Activated CD4-positive, alpha-beta memory T cell treated with anti-CD3 and anti-CD28 coated beads, Interleukin-2, amount 10 ng/mL, durations not matched to agents 7 days and 5 days (primary cell): ENCODE measurements at regions of chr19 and their contacts with region 1.

Region 1: DNA sequence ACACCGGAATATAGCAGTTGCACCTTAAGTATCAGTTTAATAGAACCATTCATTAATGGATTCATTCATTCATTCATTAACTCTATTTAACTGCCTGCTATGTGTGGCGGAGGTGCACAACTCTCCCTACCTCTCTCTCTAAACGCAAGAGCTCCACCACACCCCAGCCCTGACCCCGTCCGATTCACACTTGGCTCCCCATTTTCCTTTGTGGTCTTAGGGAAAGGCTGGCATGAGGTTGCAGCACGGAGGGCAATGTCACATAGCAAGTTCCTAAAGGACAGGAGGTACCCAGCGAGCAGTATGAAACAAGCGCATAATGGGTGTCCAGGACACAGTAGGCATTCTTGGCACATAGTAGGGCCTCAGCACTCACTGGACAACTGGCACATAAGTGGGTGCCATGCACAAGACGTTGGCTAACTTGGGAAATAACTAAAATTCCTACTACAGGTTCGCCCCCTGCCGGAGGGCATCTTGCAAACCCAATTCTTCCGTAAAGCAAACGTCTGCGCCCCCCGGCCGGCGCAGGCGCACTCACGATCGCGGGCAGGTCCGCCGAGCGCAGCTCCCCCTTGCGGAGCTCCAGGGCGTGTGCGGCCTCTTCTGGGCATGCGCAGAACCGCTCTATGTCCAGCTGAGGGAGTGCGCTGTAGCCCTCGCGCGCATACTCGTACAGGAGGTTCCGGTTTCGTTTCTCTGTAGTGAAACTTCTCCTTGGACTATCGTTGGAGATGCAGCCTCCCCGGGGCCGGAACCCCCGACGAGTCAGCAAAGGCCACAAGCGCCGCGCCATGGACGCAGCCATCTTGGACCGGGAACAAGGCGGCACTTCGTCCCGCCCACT is at the start of gene SARS2:
- DNase-seq: peak; percentile 94
- H3K4me3 Mint-ChIP-seq: peak within 1 kb of the TSS; percentile 93
- H3K27ac Mint-ChIP-seq: peak within 1 kb of the TSS; percentile 92
- H3K4me1 Mint-ChIP-seq: peaks cover 55% of the 10 kb centered on the region
- H3K27me3 Mint-ChIP-seq: no peaks in the 10 kb centered on the region
- total RNA-seq, gene SARS2: 28.4 to 32.7 TPM

Region 2: GRCh38 chr19:38425810-38426466 is 504.2 kb before region 1 on chr19 and contains the start of gene RASGRP4:
- CTCF ChIA-PET with region 1: interaction called, 18 read pairs
- POLR2A ChIA-PET with region 1: no interaction called
- DNase-seq: peak; percentile 61
- H3K4me3 Mint-ChIP-seq: peak within 1 kb of the TSS; percentile 78
- H3K27ac Mint-ChIP-seq: peak within 1 kb of the TSS; percentile 88
- H3K4me1 Mint-ChIP-seq: peaks cover 39% of the 10 kb centered on the region
- H3K27me3 Mint-ChIP-seq: no peaks in the 10 kb centered on the region
- total RNA-seq, gene RASGRP4: 19.5 to 20.0 TPM

Region 3: DNA sequence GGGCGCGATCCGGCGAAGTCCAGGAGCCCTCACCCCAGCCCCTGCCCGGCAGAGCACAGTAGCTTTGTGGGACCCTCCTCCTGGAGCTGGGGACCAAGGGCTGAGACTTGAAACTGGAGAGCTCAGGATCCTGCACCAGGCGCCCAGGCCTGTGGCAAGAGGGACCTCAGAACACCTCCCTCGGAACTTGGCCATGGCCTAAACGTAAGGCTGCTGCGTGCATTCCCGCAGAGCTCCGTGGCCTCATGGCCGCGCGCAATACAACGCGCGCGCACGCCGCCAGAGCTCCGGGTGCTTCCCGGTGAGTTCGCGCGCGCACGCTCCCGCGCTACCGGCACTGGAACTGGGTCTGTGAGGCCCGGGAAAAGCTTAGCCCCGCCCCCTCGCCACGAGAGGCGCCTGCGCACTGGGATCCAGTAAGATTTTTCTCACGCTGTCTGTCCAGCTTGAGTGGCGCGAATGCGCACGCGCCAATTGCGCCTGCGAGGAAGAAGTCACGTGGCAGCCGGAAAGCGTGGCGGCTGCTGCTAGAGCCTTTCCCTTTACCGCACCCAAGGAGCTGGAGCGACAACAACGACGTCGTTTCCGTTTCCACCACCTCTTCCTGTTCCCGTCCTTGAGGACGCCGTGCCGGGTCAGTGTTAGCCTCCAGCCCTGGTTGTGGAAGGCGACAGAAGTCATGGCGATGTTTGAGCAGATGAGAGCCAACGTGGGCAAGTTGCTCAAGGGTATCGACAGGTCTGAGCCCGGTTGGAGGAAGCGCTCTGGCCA is 311.4 kb before region 1 on chr19 and contains the start of gene EIF3K:
- CTCF ChIA-PET with region 1: interaction called, 17 read pairs
- POLR2A ChIA-PET with region 1: interaction called, 6 read pairs
- DNase-seq: peak; percentile 98
- H3K4me3 Mint-ChIP-seq: peak within 1 kb of the TSS; percentile 99
- H3K27ac Mint-ChIP-seq: peak within 1 kb of the TSS; percentile 93
- H3K4me1 Mint-ChIP-seq: peaks cover 51% of the 10 kb centered on the region
- H3K27me3 Mint-ChIP-seq: no peaks in the 10 kb centered on the region
- total RNA-seq, gene EIF3K: 297 TPM

Region 4: GRCh38 chr19:38769635-38770211 is 160.4 kb before region 1 on chr19:
- CTCF ChIA-PET with region 1: interaction called, 16 read pairs
- POLR2A ChIA-PET with region 1: interaction called, 6 read pairs
- DNase-seq: peak; percentile 93
- H3K4me3 Mint-ChIP-seq: peak overlapping the region; percentile 52
- H3K27ac Mint-ChIP-seq: peak overlapping the region; percentile 70
- H3K4me1 Mint-ChIP-seq: peaks cover 12% of the 10 kb centered on the region
- H3K27me3 Mint-ChIP-seq: peaks cover 2% of the 10 kb centered on the region

Region 5: DNA sequence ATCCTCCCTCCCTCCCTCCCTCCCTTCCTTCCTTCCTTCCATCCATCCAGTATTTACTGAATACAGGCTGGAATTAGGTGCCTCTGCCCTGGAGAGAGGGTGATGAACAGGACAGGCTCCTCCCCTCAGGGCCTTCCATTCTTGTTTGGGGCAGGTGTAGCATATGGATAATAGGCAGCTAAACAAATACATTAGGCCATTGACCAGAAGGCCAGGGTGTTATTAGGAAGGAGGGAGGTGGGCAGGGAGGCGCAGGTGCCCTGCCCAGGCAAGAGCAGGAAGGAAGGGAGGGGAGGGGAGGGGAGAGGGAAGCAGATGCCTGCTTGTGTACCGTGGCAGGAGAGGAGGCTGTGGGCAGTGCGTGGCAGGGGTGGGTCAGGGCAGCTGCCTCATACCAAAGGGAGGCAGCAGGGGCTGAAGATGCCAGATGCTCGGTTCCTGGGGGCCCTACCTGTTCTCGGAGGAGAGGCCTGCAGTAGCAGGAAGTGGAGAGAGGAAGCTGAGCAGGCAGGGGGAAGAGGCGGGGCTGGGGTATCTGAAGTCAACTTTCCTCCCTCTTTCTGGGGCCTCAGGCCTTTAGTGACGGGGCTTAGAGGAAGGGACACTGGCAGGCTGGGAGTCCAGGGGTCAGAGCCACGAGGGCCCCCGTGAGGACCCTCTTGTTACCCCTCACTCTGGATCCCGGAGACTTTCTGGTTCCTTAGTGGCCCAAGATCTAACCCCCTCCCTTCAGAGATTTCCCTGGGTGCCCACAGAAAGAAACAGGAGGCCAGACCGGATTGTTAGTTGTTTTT is 52.2 kb before region 1 on chr19 and contains the start of gene RINL:
- CTCF ChIA-PET with region 1: interaction called, 21 read pairs
- POLR2A ChIA-PET with region 1: no interaction called
- DNase-seq: peak; percentile 78
- H3K4me3 Mint-ChIP-seq: peak within 1 kb of the TSS; percentile 87
- H3K27ac Mint-ChIP-seq: peak within 1 kb of the TSS; percentile 98
- H3K4me1 Mint-ChIP-seq: peaks cover 43% of the 10 kb centered on the region
- H3K27me3 Mint-ChIP-seq: no peaks in the 10 kb centered on the region
- total RNA-seq, gene RINL: 79.9 to 82.2 TPM

Region 6: DNA sequence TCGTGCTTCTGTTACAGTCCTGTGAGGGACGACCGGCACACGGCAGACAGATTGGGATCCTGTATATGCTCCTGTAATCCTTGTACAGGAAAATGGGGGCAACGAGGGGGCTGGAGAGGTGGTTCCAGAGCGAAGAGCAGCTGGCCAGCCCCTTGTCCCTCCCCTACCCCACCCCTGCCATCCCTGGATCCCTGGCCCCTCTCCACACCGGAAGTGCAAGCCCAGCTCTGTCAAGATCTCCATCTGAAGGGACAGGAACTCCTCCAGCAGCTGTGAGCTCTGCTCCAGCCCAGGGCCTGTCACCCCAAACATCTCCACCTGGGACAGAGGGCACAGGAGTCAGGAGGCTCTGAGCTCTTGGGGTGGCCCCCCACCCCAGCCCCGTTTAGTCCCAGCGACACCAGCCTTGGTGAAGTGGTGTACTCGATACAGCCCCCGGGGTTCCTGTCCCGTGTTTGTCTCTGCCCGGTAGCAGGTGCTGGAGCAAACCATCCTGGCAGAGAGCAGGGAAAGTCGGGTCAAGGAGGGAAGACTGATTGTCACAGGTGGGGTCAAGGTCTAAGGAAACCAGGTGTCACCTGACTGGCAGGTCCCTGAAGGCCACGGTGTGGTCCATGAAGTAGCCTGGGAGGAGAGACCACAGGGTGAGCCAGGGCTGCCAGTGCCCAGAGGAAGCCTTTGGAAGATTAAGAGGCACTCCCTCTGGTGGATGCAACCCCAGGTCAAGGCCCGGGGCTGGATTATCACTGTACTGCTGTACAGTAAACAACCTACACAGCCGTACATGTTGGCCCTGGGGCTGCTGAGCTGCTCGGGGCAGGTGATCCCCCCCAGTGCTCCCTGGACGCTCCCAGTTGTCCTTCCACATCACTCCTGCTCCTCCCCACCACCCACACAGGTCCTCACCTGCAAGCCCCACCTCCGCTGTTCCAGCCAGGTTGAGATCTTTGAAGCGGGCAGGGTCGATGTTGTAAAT is 12.3 kb before region 1 on chr19:
- CTCF ChIA-PET with region 1: interaction called, 11 read pairs
- POLR2A ChIA-PET with region 1: interaction called, 7 read pairs
- DNase-seq: no peak
- H3K4me3 Mint-ChIP-seq: no peak overlapping the region
- H3K27ac Mint-ChIP-seq: no peak overlapping the region
- H3K4me1 Mint-ChIP-seq: peaks cover 4% of the 10 kb centered on the region
- H3K27me3 Mint-ChIP-seq: no peaks in the 10 kb centered on the region